Psoas muscle (tissue), 8 donors: ENCODE measurements at regions of chr5 and their contacts with region 1.

Region 1: DNA sequence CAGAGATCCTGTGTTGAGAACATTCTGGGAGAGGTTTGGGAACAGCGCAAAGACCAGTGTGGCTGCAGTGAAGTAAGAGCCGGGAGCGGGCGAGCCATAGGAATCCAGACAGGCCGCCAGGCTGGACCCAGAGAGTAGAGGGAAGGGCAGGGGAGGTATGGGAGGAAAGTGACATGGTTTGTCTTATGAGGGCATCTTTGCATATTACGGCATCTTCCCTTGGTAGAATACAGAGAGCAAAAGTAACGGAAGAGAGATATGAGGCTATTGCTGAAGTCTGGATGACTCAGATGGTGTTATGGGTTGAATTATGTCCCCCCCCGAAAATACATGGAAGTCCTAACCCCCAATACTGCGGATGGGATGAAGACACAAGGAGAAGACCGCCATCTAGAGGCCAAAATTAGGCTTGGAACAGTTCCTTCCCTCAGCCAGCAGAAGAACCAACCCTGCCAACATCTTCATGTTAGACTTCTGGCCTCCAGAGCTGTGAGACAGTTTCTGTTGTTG is 268.2 kb downstream of the MAST4 start:
- DNase-seq: no peak
- ATAC-seq: no peak
- H3K4me3 ChIP-seq: no peak overlapping the region
- H3K27ac ChIP-seq: no peak overlapping the region
- H3K4me1 ChIP-seq: no peaks in the 10 kb centered on the region
- H3K27me3 ChIP-seq: no peaks in the 10 kb centered on the region
- CTCF ChIP-seq: peak; percentile 32

Region 2: GRCh38 chr5:66467564-66467963 is 396.8 kb before region 1 on chr5:
- intact Hi-C with region 1: no loop called
- DNase-seq: no peak
- ATAC-seq: no peak
- H3K4me3 ChIP-seq: no peak overlapping the region
- H3K27ac ChIP-seq: no peak overlapping the region
- H3K4me1 ChIP-seq: no peaks in the 10 kb centered on the region
- H3K27me3 ChIP-seq: no peaks in the 10 kb centered on the region
- CTCF ChIP-seq: no peak

Region 3: GRCh38 chr5:66689522-66690220 is 174.7 kb before region 1 on chr5:
- intact Hi-C with region 1: no loop called
- DNase-seq: no peak
- ATAC-seq: no peak
- H3K4me3 ChIP-seq: no peak overlapping the region
- H3K27ac ChIP-seq: no peak overlapping the region
- H3K4me1 ChIP-seq: no peaks in the 10 kb centered on the region
- H3K27me3 ChIP-seq: no peaks in the 10 kb centered on the region
- CTCF ChIP-seq: no peak

Region 4: DNA sequence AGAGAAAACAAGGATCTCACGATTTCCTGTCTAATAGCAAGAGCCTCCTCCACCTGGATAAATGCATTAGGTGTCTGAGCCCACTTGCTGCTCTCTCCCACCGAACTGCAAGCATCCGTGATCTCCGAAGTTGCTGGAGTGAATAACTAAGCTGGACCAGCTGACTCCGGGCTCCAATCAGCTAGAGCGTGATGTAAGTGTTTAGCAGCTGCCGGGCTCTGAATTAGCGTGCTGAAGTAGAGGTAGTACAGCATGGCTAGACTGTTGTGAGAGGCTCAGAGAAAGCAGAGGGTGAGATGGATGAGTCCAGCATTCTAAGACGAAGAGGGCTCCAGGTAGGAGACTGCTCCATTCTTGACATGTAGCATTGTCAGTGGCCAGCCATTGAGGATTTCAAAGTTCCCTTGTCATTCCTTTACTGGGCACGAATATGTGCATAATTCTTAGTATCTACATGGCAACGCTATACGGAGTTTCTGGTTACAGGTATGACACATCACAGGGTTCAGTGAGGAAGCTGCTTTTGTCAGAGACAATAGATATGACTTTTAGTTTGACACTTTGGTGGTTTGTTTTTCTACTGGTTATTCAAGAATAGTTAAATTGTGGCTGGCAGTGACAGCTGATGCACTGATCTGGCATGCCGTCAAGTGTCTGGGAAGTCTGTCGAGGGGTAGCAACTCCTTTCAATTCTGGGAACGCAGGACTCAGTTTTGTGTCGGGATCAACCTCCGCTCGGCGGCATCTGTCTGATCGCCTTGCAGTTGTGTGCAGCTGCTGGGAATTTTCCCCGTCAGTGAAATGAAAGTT is 35.6 kb before region 1 on chr5:
- intact Hi-C with region 1: loop called in 1 of 2 experiments (anchors 5 kb)
- DNase-seq: peak in 1 of 2 donors; percentile 62
- ATAC-seq: peak; percentile 82 to 88 (median 86)
- H3K4me3 ChIP-seq: peak overlapping the region; percentile 60
- H3K27ac ChIP-seq: peak overlapping the region; percentile 39
- H3K4me1 ChIP-seq: peaks cover 12% of the 10 kb centered on the region
- H3K27me3 ChIP-seq: peaks cover 0 to 13% (median 0%) of the 10 kb centered on the region in 3 donors
- CTCF ChIP-seq: no peak